Activated T-helper 1 cell treated with anti-CD3 and anti-CD28 coated beads, Interleukin-12 subunit alpha, Interleukin-12 subunit beta, Interleukin-2, Interleukin-4 antibody, amounts not matched to agents 30 ng/mL and 10 ng/mL and 1 ng/mL, durations not matched to agents 14 hours and 24 hours and 36 hours (primary cell): ENCODE measurements at regions of chr1 and their contacts with region 1.

Region 1: DNA sequence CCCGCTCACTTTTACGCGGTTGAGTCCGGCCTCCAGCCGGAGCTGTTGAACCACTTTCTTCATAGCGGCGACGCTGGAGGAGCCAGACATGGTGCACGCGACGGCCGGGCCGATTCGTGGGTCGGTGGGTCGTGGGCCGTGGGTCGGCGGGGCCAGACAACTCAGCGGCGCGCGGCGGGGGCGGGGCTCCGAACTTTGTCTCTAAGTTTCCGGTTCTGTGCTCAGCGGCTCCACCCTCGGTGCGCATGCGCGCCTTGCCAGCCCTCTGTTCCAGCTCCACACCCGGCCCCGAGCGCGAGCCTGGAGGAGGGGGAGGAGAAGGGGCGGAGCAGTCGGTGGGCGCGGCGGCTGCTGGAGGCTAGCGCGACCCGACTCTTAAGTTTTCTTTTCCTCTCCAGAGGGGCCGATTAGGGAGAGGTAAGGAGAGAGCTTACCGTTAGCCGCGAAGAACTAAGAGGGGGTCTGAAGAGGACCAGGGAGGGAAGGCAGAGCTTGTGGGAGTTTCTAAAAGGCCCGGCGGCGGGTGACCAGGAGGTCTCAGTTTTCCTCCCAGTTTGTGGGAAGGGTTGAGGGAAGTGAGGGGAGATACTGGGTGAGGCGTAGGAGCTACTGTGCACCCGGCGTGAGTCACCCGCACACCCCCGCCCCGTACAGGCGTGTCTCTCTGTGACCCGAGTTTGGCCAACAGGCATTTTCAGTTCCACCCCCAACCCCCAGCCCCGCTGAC is at the starts of genes GNG5 and SPATA1:
- DNase-seq: peak; percentile 96
- H3K4me3 Mint-ChIP-seq: peak within 1 kb of the TSS; percentile 98
- H3K27ac Mint-ChIP-seq: peak within 1 kb of the TSS; percentile 98
- H3K4me1 Mint-ChIP-seq: peaks cover 38% of the 10 kb centered on the region
- H3K27me3 Mint-ChIP-seq: no peaks in the 10 kb centered on the region
- total RNA-seq, gene GNG5: 107 and 110 TPM in 2 replicates
- total RNA-seq, gene SPATA1: 1.2 and 1.3 TPM in 2 replicates

Region 2: GRCh38 chr1:84077476-84078107 is 428.6 kb before region 1 on chr1:
- intact Hi-C with region 1: loop called (anchors 1 kb)
- DNase-seq: peak; percentile 63
- H3K4me3 Mint-ChIP-seq: peak overlapping the region; percentile 87
- H3K27ac Mint-ChIP-seq: peak overlapping the region; percentile 71
- H3K4me1 Mint-ChIP-seq: peaks cover 17% of the 10 kb centered on the region
- H3K27me3 Mint-ChIP-seq: peaks cover 23% of the 10 kb centered on the region

Region 3: GRCh38 chr1:84271441-84272151 is 234.6 kb before region 1 on chr1:
- intact Hi-C with region 1: no loop called
- DNase-seq: no peak
- H3K4me3 Mint-ChIP-seq: no peak overlapping the region
- H3K27ac Mint-ChIP-seq: no peak overlapping the region
- H3K4me1 Mint-ChIP-seq: peaks cover 9% of the 10 kb centered on the region
- H3K27me3 Mint-ChIP-seq: peaks cover 2% of the 10 kb centered on the region

Region 4: DNA sequence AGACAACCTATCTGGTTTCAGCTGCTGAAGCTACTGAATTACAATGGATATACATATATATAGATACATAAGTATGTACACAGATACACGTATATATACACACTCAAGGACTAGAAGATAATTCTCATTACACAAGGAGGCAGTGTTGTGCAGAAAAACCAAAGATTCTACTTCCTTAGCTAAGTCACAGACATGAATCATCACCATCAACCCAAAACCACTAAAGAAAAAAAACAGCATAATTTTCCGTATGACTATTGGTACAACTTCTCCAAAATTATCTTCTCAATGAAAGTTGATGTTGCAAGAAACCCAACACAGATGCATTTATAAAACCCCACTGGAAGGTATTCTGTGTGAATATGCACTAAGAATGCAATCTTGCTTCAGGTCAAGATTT is 63.9 kb before region 1 on chr1:
- intact Hi-C with region 1: loop called (anchors 1 kb)
- DNase-seq: peak; percentile 13
- H3K4me3 Mint-ChIP-seq: no peak overlapping the region
- H3K27ac Mint-ChIP-seq: peak overlapping the region; percentile 73
- H3K4me1 Mint-ChIP-seq: peaks cover 23% of the 10 kb centered on the region
- H3K27me3 Mint-ChIP-seq: peaks cover 8% of the 10 kb centered on the region

Region 5: GRCh38 chr1:84541679-84542078 is 35.5 kb after region 1 on chr1:
- intact Hi-C with region 1: loop called (anchors 2 kb)
- DNase-seq: no peak
- H3K4me3 Mint-ChIP-seq: no peak overlapping the region
- H3K27ac Mint-ChIP-seq: no peak overlapping the region
- H3K4me1 Mint-ChIP-seq: peaks cover 35% of the 10 kb centered on the region
- H3K27me3 Mint-ChIP-seq: no peaks in the 10 kb centered on the region

Region 6: GRCh38 chr1:84682047-84682446 is 175.9 kb after region 1 on chr1:
- intact Hi-C with region 1: no loop called
- DNase-seq: no peak
- H3K4me3 Mint-ChIP-seq: no peak overlapping the region
- H3K27ac Mint-ChIP-seq: no peak overlapping the region
- H3K4me1 Mint-ChIP-seq: peaks cover 9% of the 10 kb centered on the region
- H3K27me3 Mint-ChIP-seq: no peaks in the 10 kb centered on the region

Region 7: DNA sequence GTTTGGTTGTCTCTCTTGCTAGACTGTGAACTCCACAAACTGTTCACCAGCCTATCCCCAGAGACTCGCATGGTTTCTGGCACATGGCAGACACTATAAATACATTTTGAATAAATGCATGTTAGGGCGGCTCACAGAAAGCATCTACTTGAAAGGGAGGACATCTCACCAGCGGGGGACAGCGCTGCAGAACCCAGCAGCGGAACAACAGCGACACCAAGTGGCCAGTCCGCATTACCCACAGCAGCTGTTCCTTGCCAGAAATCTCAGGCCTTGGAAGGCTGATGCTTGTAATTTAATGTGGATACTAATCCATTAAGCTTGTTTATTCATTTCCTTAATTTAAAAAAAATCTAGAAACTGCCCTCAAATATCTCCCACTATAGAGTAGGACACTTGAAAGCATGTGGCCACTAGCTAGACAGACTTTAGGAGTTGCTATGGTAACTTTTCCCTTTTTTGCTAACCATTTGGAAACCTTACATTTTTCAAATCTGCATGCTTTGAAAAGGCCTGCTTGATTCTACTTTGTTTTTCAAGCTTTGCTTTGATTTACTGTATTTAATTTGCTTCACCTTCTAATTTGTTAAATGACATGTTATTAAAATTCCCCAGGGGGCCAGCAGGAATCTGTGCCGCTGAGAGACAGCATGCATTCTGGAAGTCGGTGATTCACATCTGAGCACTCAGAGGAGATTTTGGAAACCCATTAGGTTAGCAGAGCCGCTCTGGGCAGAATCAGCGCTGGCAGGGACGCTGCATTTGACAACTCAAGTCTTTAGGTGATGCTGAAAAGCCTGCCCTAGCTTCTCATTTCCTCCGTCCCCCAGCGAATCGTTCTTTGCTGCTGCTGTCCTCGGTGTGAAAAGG is 247.6 kb after region 1 on chr1:
- intact Hi-C with region 1: loop called (anchors 10 kb)
- DNase-seq: peak; percentile 57
- H3K4me3 Mint-ChIP-seq: no peak overlapping the region
- H3K27ac Mint-ChIP-seq: no peak overlapping the region
- H3K4me1 Mint-ChIP-seq: peaks cover 5% of the 10 kb centered on the region
- H3K27me3 Mint-ChIP-seq: peaks cover 26% of the 10 kb centered on the region

Region 8: GRCh38 chr1:85297855-85298629 is 791.9 kb after region 1 on chr1:
- intact Hi-C with region 1: loop called (anchors 1 kb)
- DNase-seq: peak; percentile 62
- H3K4me3 Mint-ChIP-seq: peak overlapping the region; percentile 1
- H3K27ac Mint-ChIP-seq: peak overlapping the region; percentile 80
- H3K4me1 Mint-ChIP-seq: peaks cover 34% of the 10 kb centered on the region
- H3K27me3 Mint-ChIP-seq: peaks cover 47% of the 10 kb centered on the region